Naive thymus-derived CD8-positive, alpha-beta T cell (primary cell): ENCODE measurements at regions of chr11 and their contacts with region 1.

Region 1: DNA sequence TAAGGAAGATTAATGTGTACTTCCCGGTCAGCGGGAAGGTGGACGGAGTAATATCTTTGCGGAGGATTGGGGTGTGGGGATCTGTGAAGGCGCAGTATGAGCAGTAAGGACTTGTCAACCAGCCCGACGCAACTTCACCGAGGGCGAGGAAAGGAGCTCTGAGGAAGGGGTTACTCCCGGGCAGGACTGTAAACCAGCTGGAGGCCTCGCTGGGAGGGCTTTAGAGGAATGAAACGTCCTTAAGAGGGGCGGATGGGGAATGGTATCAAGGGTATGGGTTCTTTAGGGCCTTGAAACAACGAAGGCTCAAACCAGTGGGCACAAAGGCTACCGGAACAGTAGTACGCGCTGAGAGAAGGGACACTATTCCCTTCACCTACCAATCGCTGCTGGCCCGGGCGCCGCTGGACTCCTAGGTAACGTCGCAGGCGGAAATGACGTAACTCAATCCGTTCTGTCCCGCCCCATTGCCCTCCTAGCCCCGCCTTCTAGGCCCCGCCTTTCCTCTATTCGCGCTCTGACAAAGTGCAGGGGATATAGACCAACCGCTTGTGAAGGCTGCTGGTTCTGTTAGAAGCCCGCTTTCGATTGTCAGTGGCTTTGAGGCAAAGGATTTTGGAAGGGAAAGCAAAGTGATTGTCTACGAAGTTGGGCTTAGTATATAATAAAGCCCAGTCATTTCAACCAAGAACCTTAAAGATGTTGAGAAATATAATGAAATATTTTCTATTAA is at the start of gene C11orf65:
- DNase-seq: peak; percentile 86 to 97 (median 96)
- ATAC-seq: peak; percentile 91 to 94
- H3K4me3 Mint-ChIP-seq: peak within 1 kb of the TSS; percentile 95 to 100 (median 98)
- H3K27ac Mint-ChIP-seq: peak within 1 kb of the TSS; percentile 99 to 100 (median 100)
- H3K4me1 Mint-ChIP-seq: peaks cover 4 to 24% (median 15%) of the 10 kb centered on the region in 4 donors
- H3K27me3 Mint-ChIP-seq: no peaks in the 10 kb centered on the region
- polyA plus RNA-seq, gene C11orf65: 0.95 to 0.97 (median 0.95) TPM

Region 2: DNA sequence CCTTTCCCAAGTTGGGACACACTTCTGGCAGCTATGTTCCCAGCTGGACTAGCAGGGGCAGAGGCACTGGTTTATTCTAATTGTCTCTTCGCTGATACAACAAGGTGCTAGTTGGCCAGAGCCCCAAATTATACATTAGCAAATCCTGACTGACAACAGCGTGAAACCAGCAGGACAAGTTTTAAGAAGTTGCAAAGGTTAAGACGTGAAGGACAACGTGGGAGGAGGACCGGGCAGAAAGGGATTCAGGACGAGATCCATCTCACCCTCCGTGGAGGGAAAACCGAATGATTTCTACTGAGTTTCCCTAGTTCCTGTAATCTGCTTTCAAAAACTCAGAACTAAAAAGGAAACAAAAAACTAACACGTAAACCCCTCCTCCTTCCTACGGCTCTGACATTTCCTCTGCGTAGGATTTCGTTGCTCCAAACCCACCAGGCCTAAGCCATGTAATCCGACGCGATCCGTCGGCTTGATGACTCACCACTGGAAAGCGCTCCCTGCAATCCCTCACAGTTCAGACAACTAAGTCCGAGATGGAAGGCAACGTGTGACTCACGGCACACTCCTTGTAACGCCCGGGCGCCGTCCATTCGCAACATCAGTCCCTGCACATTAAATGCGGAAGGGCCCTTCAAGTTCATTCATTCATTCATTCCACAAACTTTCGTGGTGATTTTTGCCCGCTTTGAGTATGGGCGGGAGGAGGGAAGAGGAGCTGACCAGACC is 30.2 kb after region 1 on chr11:
- POLR2A ChIA-PET with region 1: interaction called, 10 read pairs
- DNase-seq: peak; percentile 43 to 82 (median 71)
- ATAC-seq: peak; percentile 81 to 83
- H3K4me3 Mint-ChIP-seq: peak overlapping the region; percentile 89 to 100 (median 96)
- H3K27ac Mint-ChIP-seq: peak overlapping the region; percentile 95 to 100 (median 99)
- H3K4me1 Mint-ChIP-seq: peaks cover 9 to 36% (median 28%) of the 10 kb centered on the region in 4 donors
- H3K27me3 Mint-ChIP-seq: no peaks in the 10 kb centered on the region